Activated T-helper 1 cell treated with anti-CD3 and anti-CD28 coated beads, Interleukin-12 subunit alpha, Interleukin-12 subunit beta, Interleukin-2, Interleukin-4 antibody, amounts not matched to agents 30 ng/mL and 10 ng/mL and 1 ng/mL, durations not matched to agents 14 hours and 24 hours and 36 hours (primary cell): ENCODE measurements at regions of chr7 and their contacts with region 1.

Region 1: GRCh38 chr7:47361746-47362215 is 220.1 kb downstream of the TNS3 start:
- DNase-seq: no peak
- H3K4me3 Mint-ChIP-seq: no peak overlapping the region
- H3K27ac Mint-ChIP-seq: peak overlapping the region; percentile 4
- H3K4me1 Mint-ChIP-seq: peaks cover 9% of the 10 kb centered on the region
- H3K27me3 Mint-ChIP-seq: no peaks in the 10 kb centered on the region

Region 2: GRCh38 chr7:47291461-47292081 is 70.2 kb before region 1 on chr7:
- intact Hi-C with region 1: loop called (anchors 1 kb)
- DNase-seq: peak; percentile 5
- H3K4me3 Mint-ChIP-seq: peak overlapping the region; percentile 15
- H3K27ac Mint-ChIP-seq: peak overlapping the region; percentile 82
- H3K4me1 Mint-ChIP-seq: peaks cover 19% of the 10 kb centered on the region
- H3K27me3 Mint-ChIP-seq: no peaks in the 10 kb centered on the region

Region 3: GRCh38 chr7:47314728-47315607 is 46.8 kb before region 1 on chr7:
- intact Hi-C with region 1: loop called (anchors 5 kb)
- DNase-seq: no peak
- H3K4me3 Mint-ChIP-seq: no peak overlapping the region
- H3K27ac Mint-ChIP-seq: peak overlapping the region; percentile 26
- H3K4me1 Mint-ChIP-seq: peaks cover 13% of the 10 kb centered on the region
- H3K27me3 Mint-ChIP-seq: peaks cover 2% of the 10 kb centered on the region

Region 4: DNA sequence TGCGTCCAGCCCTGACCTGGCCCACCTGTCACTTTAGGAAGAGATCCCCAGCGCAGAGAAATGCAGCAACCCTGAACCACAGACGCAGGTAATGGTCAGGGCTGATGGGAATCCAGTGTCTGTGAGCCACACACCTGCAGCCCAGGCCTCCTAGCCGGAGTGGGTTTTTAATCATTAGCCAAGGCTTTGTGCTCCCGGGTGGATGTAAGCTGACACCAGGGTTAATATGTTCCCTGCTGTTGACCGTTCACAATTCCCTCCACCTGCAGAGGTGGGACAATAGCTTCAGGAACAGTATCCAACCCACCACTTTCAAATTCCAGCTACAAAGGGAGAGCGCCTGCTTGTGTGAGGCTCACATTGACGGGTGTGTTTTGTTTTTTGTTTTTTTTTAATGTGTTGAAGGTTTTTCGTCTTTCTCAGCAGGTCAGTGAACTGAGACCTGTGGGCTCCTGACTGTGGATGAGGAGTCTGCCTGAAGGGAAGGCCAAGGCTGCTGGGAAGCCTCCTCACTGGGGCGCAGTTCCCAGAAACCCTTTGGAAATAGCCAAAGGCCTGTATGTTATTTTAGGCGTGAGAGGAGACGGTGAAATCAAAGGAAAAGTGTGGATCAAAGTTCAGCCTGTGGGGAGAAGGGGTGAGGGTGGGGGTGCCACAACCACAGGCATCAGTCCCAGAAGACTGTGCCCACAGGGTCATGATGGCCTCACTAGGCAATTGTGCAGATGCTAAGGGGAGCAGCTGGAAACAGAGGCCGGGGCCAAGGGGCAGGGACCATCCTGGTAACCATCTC is 109.0 kb after region 1 on chr7:
- intact Hi-C with region 1: no loop called
- DNase-seq: no peak
- H3K4me3 Mint-ChIP-seq: no peak overlapping the region
- H3K27ac Mint-ChIP-seq: no peak overlapping the region
- H3K4me1 Mint-ChIP-seq: no peaks in the 10 kb centered on the region
- H3K27me3 Mint-ChIP-seq: no peaks in the 10 kb centered on the region

Region 5: DNA sequence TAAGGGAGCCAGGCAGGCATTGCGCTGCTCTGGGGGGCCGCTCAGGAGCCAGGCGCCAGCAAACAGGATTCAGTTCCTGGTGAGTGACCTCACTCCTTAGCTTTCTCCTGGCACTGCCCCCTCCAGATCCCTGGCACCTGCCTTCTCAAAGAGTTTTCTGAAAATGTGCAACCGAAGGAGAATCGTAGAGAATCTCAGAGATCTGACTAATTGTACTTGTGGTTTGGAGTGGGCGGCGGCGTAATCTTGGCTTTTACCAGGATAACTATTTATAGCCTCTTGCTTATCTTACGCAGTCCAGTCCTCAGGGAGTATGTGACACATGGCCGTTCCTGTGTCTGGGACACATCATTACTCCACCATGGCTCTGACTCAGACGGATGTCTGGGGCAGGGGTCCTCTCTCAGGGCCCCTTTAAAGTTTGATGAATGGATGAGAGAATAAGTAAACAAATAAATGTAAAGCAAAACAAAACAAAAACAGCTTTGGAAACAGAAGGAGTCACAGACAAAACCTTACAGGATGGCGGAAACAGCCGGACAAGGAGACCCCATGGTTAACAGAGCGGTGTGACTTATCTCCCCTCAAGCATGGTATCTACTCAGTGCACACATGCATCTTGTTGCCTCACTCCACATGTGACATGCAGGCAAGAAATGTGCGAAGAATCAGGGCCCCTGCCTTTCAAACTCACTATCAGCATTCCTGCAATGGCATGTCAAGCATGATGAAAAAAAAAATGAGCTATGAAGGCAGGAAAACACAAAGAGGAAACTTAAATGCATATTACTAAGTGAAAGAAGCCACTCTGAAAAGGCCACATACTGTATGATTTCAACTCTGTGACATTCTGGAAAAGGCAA is 120.5 kb after region 1 on chr7:
- intact Hi-C with region 1: loop called (anchors 5 kb)
- DNase-seq: no peak
- H3K4me3 Mint-ChIP-seq: peak overlapping the region; percentile 10
- H3K27ac Mint-ChIP-seq: peak overlapping the region; percentile 67
- H3K4me1 Mint-ChIP-seq: peaks cover 22% of the 10 kb centered on the region
- H3K27me3 Mint-ChIP-seq: no peaks in the 10 kb centered on the region

Region 6: DNA sequence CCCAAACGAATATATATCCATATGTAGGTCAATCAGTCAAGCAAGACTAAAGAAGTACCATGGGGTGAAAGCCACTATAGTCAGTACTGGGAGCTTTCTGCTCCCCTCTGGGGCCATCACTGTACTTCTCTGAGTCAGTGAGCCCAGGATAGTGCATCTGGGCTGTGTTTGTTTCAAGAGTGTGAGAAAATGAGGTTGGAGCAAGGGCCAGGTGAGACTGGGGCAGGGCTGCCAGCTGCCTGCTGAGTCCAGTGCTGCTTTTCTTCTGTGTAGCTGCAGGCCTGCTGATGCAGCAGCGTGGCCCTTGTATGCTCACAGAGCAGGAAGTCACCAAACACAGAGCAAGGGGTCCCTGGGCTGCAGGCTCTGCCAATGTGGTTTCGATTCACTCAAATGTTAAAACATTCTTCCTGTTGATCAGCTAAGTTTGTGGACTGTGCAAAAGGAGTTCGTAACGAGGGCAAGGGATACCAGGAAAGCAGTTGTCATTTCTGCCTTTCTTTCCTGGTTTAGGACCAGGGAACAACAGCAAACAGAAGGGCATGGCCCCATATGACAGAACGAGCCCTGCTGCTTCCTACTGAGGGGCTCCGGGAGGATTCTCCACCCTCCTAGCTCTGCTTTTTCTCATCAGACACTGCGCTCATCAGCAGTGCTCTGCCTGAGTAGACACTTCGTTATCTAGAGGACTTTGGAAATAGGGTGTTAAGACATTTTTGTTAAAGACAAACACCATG is 285.6 kb after region 1 on chr7:
- intact Hi-C with region 1: no loop called
- DNase-seq: no peak
- H3K4me3 Mint-ChIP-seq: no peak overlapping the region
- H3K27ac Mint-ChIP-seq: no peak overlapping the region
- H3K4me1 Mint-ChIP-seq: peaks cover 15% of the 10 kb centered on the region
- H3K27me3 Mint-ChIP-seq: no peaks in the 10 kb centered on the region